Activated CD8-positive, alpha-beta T cell treated with anti-CD3 and anti-CD28 coated beads for 36 hours (primary cell): ENCODE measurements at regions of chr5 and their contacts with region 1.

Region 1: DNA sequence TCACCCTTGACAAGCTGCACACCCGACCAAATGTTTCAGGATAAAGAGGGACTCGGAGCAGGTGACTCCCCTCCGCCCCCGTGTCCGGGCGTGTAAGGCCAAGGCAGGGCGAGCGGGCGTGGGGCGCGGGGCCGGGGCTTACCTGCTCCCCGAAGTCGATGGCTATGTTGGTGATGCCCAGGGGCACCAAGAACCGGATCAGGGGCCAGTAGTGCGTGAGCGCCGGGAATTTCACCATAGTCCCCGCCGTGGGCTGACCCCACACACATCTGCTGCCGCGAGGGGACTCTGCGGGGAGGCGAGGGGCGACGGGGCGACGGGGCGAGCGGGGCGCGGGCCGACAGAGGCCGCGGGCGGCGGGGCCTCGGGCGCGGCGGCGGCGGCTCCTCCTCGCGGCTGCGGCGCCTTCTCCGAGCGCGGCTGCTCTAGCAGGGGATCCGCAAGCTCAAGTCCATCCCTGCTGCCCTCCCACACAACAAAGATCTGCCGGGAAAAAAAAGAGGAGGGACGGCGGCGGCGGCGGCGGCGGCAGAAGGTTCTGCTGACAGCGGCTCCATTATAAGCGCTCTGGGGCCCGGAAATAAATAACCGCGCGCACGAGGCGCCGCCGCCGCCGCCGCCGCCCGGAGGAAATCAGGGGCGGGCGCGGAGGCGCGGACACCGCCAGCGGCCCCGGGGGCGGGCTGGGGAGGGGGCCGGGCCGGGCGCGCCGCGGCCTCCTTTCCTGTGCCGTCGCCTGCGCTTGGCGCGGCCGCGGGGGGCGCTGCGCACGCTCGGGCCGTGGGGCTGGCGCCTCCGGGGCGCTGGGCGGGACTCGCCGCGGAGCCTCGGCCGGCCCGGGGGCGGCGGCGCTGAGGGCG is at the start of gene ANKH:
- DNase-seq: peak; percentile 81
- ATAC-seq: peak; percentile 84
- H3K4me3 Mint-ChIP-seq: peak within 1 kb of the TSS; percentile 90
- H3K27ac Mint-ChIP-seq: peak within 1 kb of the TSS; percentile 90
- H3K4me1 Mint-ChIP-seq: peaks cover 29% of the 10 kb centered on the region
- H3K27me3 Mint-ChIP-seq: no peaks in the 10 kb centered on the region
- CTCF ChIP-seq: no peak
- total RNA-seq, gene ANKH: 85.4 to 87.2 TPM

Region 2: DNA sequence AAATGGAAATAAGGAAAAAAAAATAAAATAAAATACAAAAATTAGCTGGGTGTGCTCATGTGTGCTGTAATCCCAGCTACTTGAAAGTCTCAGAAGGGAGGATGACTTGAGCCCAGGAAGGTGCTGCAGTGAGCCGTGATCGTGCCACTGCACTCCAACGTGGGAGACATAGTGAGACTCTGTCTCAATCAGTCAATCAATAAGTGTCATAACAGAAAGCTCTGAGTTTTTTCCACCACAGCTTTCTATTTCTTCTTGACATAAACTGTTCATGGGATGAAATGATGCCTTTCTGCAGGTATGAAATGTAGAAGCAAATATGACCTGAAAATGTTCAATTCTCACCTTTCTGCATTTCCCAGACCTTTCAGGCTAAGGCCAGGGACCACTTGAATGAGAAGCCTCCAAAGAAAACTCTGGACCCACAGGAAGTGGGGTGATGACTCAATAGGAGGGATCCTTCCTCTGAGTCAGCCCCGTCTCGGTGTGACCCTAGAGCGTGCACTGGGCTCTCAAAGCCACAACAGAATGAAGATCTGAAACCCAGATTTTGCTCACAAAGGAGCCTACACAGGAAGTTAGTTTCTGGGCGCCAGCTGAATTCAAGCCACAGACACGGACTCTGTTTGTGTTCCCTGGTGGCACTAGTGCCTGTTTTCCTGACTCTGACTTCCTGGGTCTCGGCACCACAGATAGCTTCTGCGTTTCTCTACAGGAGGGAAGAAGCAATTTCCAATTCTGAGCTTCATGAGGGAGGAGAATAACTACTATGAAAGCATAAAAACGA is 61.9 kb before region 1 on chr5:
- CTCF ChIA-PET with region 1: interaction called, 13 read pairs
- POLR2A ChIA-PET with region 1: interaction called, 13 read pairs
- intact Hi-C with region 1: loop called (anchors 1 kb)
- DNase-seq: peak; percentile 89
- ATAC-seq: peak; percentile 97
- H3K4me3 Mint-ChIP-seq: peak overlapping the region; percentile 55
- H3K27ac Mint-ChIP-seq: peak overlapping the region; percentile 86
- H3K4me1 Mint-ChIP-seq: peaks cover 59% of the 10 kb centered on the region
- H3K27me3 Mint-ChIP-seq: no peaks in the 10 kb centered on the region
- CTCF ChIP-seq: no peak

Region 3: DNA sequence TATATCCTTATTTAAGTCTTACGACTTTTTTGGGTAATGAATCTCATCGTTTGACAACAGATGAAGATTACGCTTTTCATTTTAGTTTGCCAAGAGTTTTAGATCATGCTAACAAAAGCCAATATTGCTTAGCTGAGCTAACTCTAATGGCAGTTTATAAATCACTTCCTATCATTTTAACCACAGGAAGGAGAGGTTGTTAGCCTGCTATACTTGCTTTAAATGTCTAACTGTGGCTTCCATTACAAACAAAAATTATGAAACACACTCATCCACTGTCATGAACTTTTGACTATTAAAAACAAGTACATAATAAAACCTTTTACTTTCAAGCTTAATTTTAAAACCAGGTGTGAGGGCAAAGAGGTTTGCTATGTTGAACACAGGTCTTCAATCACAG is 53.9 kb after region 1 on chr5:
- CTCF ChIA-PET with region 1: interaction called, 4 read pairs
- POLR2A ChIA-PET with region 1: interaction called, 3 read pairs
- intact Hi-C with region 1: loop called (anchors 2 kb)
- DNase-seq: no peak
- ATAC-seq: no peak
- H3K4me3 Mint-ChIP-seq: peak overlapping the region; percentile 32
- H3K27ac Mint-ChIP-seq: peak overlapping the region; percentile 92
- H3K4me1 Mint-ChIP-seq: peaks cover 44% of the 10 kb centered on the region
- H3K27me3 Mint-ChIP-seq: no peaks in the 10 kb centered on the region
- CTCF ChIP-seq: no peak

Region 4: GRCh38 chr5:14996997-14997396 is 125.6 kb after region 1 on chr5:
- CTCF ChIA-PET with region 1: interaction called, 10 read pairs
- POLR2A ChIA-PET with region 1: interaction called, 5 read pairs
- intact Hi-C with region 1: loop called (anchors 5 kb)
- DNase-seq: no peak
- ATAC-seq: no peak
- H3K4me3 Mint-ChIP-seq: no peak overlapping the region
- H3K27ac Mint-ChIP-seq: no peak overlapping the region
- H3K4me1 Mint-ChIP-seq: peaks cover 24% of the 10 kb centered on the region
- H3K27me3 Mint-ChIP-seq: peaks cover 2% of the 10 kb centered on the region
- CTCF ChIP-seq: no peak